CD4-positive, alpha-beta memory T cell (primary cell): ENCODE measurements at regions of chr2 and their contacts with region 1.

Region 1: GRCh38 chr2:234135720-234136221 is 85.3 kb downstream of the SPP2 start:
- DNase-seq: peak; percentile 31 to 51 (median 45)
- H3K4me3 ChIP-seq: no peak overlapping the region
- H3K4me3 Mint-ChIP-seq: peak overlapping the region in 4 of 8 donors; percentile 9 to 43 (median 27)
- H3K27ac ChIP-seq: no peak overlapping the region
- H3K27ac Mint-ChIP-seq: peak overlapping the region; percentile 16 to 78 (median 57)
- H3K4me1 ChIP-seq: peaks cover 28% of the 10 kb centered on the region
- H3K4me1 Mint-ChIP-seq: peaks cover 20 to 46% (median 28%) of the 10 kb centered on the region in 4 donors
- H3K27me3 ChIP-seq: no peaks in the 10 kb centered on the region
- H3K27me3 Mint-ChIP-seq: no peaks in the 10 kb centered on the region

Region 2: DNA sequence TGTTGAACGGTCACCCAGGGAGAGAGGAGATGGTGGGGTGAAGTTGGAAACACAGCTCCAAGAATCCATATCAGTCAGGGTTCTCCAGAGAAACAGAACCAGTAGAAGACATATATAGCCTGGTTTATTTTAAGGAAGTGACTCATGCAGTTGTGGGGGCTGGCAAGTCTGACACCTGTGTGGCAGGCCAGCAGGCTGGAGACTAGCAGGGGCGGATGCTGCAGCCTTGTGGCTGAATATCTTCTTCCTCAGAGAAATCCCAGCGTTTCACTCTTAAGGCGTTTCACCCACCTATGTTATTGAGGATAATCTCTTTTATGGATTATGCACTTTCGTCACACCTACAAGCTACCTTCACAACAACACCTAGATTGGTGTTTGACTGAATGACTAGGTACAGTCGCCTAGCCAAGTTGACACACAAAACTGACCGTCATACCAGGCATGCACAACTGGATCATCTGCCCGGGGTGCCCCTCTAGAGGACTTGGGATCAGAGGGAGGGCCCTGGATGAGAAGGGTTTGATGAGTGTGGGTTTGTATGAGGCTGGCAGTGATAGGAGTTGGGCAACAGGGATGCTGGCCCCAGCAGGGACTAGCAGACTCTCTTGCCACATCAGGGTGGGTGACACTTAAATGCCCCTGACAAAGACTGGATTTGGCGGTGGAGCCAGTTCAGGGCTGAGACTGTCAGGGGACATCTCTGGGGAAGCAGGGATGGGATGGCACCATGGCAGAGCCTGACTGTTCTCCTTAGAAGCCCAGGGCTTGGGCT is 334.2 kb before region 1 on chr2:
- CTCF ChIA-PET with region 1: no interaction called
- POLR2A ChIA-PET with region 1: no interaction called
- intact Hi-C with region 1: no loop called
- DNase-seq: no peak
- H3K4me3 ChIP-seq: no peak overlapping the region
- H3K4me3 Mint-ChIP-seq: no peak overlapping the region
- H3K27ac ChIP-seq: no peak overlapping the region
- H3K27ac Mint-ChIP-seq: no peak overlapping the region
- H3K4me1 ChIP-seq: no peaks in the 10 kb centered on the region
- H3K4me1 Mint-ChIP-seq: no peaks in the 10 kb centered on the region
- H3K27me3 ChIP-seq: no peaks in the 10 kb centered on the region
- H3K27me3 Mint-ChIP-seq: peaks cover 8 to 17% of the 10 kb centered on the region in 2 donors

Region 3: DNA sequence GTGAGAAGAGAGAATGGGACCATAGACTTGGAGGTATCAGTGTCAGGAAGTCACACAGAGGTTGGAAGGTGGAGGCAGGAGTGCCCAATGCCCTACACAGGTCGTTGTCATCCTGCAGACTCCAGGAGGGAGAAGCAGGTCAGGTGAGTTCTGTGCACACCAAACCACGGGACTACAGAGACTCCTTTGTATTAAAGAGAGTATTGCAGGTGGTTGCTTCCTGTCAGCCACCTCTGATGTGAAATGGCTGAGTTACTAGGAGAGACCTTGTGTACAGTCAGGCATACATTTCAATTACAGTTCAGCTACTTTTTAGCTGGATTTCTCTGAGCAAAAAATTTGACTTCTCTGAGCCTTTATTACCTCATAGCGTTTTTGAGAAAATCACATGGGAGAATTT is 33.7 kb before region 1 on chr2:
- CTCF ChIA-PET with region 1: interaction called, 10 read pairs
- POLR2A ChIA-PET with region 1: no interaction called
- intact Hi-C with region 1: no loop called
- DNase-seq: peak in 4 of 5 donors; percentile 27 to 49 (median 48)
- H3K4me3 ChIP-seq: peak overlapping the region in 1 of 2 donors; percentile 18
- H3K4me3 Mint-ChIP-seq: peak overlapping the region in 6 of 8 donors; percentile 14 to 77 (median 52)
- H3K27ac ChIP-seq: no peak overlapping the region
- H3K27ac Mint-ChIP-seq: peak overlapping the region; percentile 1 to 80 (median 62)
- H3K4me1 ChIP-seq: peaks cover 37% of the 10 kb centered on the region
- H3K4me1 Mint-ChIP-seq: peaks cover 38 to 57% (median 44%) of the 10 kb centered on the region in 4 donors
- H3K27me3 ChIP-seq: no peaks in the 10 kb centered on the region
- H3K27me3 Mint-ChIP-seq: no peaks in the 10 kb centered on the region

Region 4: GRCh38 chr2:234164493-234165413 is 29.0 kb after region 1 on chr2:
- CTCF ChIA-PET with region 1: interaction called, 6 read pairs
- POLR2A ChIA-PET with region 1: no interaction called
- intact Hi-C with region 1: loop called (anchors 2 kb)
- DNase-seq: peak; percentile 38 to 63 (median 47)
- H3K4me3 ChIP-seq: no peak overlapping the region
- H3K4me3 Mint-ChIP-seq: peak overlapping the region in 6 of 8 donors; percentile 33 to 67 (median 39)
- H3K27ac ChIP-seq: no peak overlapping the region
- H3K27ac Mint-ChIP-seq: peak overlapping the region; percentile 43 to 86 (median 62)
- H3K4me1 ChIP-seq: peaks cover 19% of the 10 kb centered on the region
- H3K4me1 Mint-ChIP-seq: peaks cover 16 to 37% (median 23%) of the 10 kb centered on the region in 4 donors
- H3K27me3 ChIP-seq: no peaks in the 10 kb centered on the region
- H3K27me3 Mint-ChIP-seq: no peaks in the 10 kb centered on the region

Region 5: DNA sequence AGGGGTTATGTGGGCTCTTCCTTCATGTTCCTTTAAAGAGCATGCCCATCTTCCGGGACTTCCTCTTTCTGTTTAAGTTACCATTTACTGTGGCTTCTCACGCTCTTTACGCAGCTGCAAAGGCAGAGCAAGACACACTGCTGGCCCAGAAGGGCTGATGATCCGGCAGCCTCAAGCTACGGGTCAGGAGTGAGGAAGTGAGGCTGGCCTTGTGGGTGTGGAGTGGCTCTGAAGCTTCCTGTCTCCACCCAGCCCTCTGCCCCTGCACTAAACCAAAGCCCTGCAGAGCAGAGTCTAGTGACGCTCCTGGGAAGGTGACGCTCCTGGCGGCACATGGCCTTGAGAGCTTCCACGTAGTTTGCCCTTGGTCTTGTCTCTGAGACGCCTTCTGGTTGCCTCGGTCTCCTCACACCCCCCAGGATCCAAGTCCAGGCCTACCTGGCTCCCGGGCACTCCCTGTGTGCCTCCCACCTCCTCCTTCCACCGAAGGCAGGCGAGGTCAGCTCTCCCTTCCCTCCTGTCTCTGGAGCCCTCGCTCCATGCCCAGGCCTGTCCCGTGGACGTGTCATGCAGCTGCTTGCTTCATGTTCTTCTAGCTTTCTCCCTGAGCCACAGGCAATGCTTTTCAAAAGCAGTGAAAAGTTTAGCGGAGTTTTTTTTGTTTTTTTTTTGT is 310.8 kb after region 1 on chr2:
- CTCF ChIA-PET with region 1: interaction called, 4 read pairs
- POLR2A ChIA-PET with region 1: interaction called, 18 read pairs
- intact Hi-C with region 1: no loop called
- DNase-seq: peak; percentile 87 to 92 (median 90)
- H3K4me3 ChIP-seq: no peak overlapping the region
- H3K4me3 Mint-ChIP-seq: peak overlapping the region; percentile 38 to 90 (median 80)
- H3K27ac ChIP-seq: peak overlapping the region; percentile 84
- H3K27ac Mint-ChIP-seq: peak overlapping the region; percentile 98 to 100 (median 100)
- H3K4me1 ChIP-seq: peaks cover 95% of the 10 kb centered on the region
- H3K4me1 Mint-ChIP-seq: peaks cover 69 to 96% (median 77%) of the 10 kb centered on the region in 4 donors
- H3K27me3 ChIP-seq: no peaks in the 10 kb centered on the region
- H3K27me3 Mint-ChIP-seq: no peaks in the 10 kb centered on the region

Region 6: DNA sequence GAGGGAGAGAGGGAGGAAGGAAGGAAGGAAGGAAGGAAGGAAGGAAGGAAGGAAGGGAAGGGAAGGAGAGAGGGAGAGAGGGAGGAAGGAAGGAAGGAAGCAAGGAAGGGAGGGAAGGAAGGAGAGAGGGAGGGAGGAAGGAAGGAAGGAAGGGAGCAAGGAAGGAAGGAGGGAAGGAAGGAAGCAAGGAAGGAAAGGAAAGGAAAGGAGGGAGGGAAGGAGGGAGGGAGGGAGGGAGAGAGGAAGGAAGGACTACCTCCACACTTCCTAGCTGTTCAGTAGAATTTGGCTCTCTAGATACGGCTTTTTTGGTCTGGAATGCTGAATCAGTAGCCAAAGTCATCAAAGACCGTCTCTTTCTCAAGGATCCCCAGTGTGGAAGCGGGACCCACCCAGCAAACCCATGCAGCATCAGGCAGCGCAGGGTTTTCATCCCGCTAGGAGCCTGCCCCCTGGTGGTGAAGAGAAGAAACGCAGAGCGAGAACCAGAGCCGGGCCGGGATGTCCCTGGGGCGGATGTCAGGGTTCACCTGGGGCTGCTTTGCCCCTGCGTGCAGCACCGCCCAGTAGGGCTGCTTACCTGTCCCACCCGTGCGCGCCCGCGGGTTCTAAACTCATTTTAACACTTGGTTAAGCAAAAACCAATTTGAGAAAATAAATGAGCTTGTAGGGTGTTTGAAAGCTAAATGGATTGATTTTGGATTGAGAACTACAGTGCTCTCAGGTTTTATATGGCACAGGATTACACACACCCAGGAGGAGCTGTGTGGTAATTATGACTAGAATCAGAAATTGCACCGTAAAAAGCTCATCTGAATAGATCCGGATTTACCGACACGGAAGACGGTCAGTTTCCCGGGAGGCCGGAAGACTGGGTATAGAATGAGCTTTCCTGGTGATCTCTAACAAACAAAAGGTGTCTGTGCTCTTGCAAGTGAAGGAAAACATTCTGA is 409.2 kb after region 1 on chr2:
- CTCF ChIA-PET with region 1: interaction called, 22 read pairs
- POLR2A ChIA-PET with region 1: no interaction called
- intact Hi-C with region 1: loop called (anchors 1 kb)
- DNase-seq: peak; percentile 61 to 73 (median 69)
- H3K4me3 ChIP-seq: no peak overlapping the region
- H3K4me3 Mint-ChIP-seq: no peak overlapping the region
- H3K27ac ChIP-seq: no peak overlapping the region
- H3K27ac Mint-ChIP-seq: peak overlapping the region in 2 of 7 donors; percentile 13 to 53
- H3K4me1 ChIP-seq: peaks cover 7% of the 10 kb centered on the region
- H3K4me1 Mint-ChIP-seq: peaks cover 2 to 13% (median 4%) of the 10 kb centered on the region in 4 donors
- H3K27me3 ChIP-seq: no peaks in the 10 kb centered on the region
- H3K27me3 Mint-ChIP-seq: peaks cover 5 to 14% of the 10 kb centered on the region in 2 donors